K562 (cell line): ENCODE measurements at regions of chr12 and their contacts with region 1.

Region 1: GRCh38 chr12:123232807-123233543 is at the starts of genes MPHOSPH9 and MTRFR:
- DNase-seq: peak; percentile 98 to 99 (median 99)
- ATAC-seq: peak; percentile 95
- H3K4me3 ChIP-seq: peak within 1 kb of the TSS; percentile 72
- H3K27ac ChIP-seq: peak within 1 kb of the TSS; percentile 94
- H3K4me1 ChIP-seq: peaks cover 19 to 21% of the 10 kb centered on the region in 2 experiments; a peak in 4 of 5 replicates
- H3K27me3 ChIP-seq: no peaks in the 10 kb centered on the region
- CTCF ChIP-seq: no peak
- EP300 ChIP-seq: no peak
- POLR2A ChIP-seq: peak; percentile 100
- RAD21 ChIP-seq: 0 out of 4 replicates have a peak, but pooled peaks of 1 of the 2 experiments have one; percentile 3
- polyA plus RNA-seq, gene MPHOSPH9: 14.2 to 22.5 TPM
- polyA plus RNA-seq, gene MTRFR: 52.6 to 55.6 TPM

Region 2: GRCh38 chr12:122356192-122356635 is 876.8 kb before region 1 on chr12:
- CTCF ChIA-PET with region 1: no interaction called
- POLR2A ChIA-PET with region 1: no interaction called
- in situ Hi-C with region 1: no loop called
- intact Hi-C with region 1: loop called (anchors 5 kb)
- DNase-seq: peak; percentile 33 to 69 (median 56)
- ATAC-seq: peak; percentile 98
- H3K4me3 ChIP-seq: no peak overlapping the region
- H3K27ac ChIP-seq: no peak overlapping the region
- H3K4me1 ChIP-seq: no peaks in the 10 kb centered on the region
- H3K27me3 ChIP-seq: no peaks in the 10 kb centered on the region
- CTCF ChIP-seq: peak; percentile 60 to 82 (median 82)
- EP300 ChIP-seq: no peak
- POLR2A ChIP-seq: no peak
- RAD21 ChIP-seq: peak; percentile 72 to 74

Region 3: DNA sequence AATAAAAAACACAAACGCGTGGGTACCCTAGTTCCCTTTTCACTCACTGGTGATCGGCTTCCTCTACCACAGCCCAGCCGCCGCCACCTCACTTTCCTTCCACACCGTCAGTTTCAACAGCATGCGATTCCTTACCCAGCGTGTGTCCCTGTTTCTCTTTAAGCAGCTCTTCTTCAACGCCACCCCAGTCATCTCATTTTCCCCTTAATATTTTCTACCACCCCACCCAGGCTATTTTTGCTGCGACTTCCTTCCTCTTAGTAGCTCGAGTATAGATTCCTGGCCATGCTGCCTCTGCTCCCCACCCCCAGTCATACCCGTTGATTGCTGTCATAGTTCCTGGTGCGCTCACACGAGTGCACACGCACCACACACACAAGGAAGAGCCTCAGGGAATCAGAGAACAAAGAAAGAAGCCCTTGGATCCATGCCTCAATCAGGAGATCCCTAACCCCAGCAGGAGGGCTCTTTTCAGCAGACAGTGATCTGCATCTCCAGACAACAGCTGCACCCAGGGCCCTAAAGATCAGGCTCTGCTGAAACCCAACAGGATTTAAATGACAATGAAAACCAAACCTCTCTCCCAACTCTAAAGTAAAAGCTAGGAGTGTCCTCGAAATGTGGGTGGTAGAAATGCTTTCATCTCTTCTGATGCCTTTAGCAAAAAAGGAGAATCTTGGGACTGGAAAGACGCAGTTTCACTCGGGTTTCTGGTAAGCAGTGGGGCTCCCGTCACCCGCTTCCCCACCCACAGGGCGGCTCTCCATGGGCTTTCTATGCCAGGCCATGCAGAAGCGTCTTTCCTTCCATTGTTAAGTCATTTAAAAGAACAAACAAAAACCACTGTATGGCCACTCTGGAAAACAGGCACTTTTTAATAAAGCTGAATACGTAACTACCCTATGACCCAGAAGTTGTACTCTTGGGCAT is 360.9 kb before region 1 on chr12:
- CTCF ChIA-PET with region 1: no interaction called
- POLR2A ChIA-PET with region 1: no interaction called
- in situ Hi-C with region 1: loop called (anchors 10 kb)
- intact Hi-C with region 1: no loop called
- DNase-seq: no peak
- ATAC-seq: no peak
- H3K4me3 ChIP-seq: no peak overlapping the region
- H3K27ac ChIP-seq: no peak overlapping the region
- H3K4me1 ChIP-seq: peaks cover 5 to 26% of the 10 kb centered on the region in 2 experiments; a peak in 3 of 5 replicates
- H3K27me3 ChIP-seq: no peaks in the 10 kb centered on the region
- CTCF ChIP-seq: no peak
- EP300 ChIP-seq: no peak
- POLR2A ChIP-seq: no peak
- RAD21 ChIP-seq: no peak

Region 4: GRCh38 chr12:122963953-122964301 is 269.0 kb before region 1 on chr12:
- CTCF ChIA-PET with region 1: no interaction called
- POLR2A ChIA-PET with region 1: interaction called, 4 read pairs
- in situ Hi-C with region 1: no loop called
- intact Hi-C with region 1: loop called (anchors 5 kb)
- DNase-seq: no peak
- ATAC-seq: no peak
- H3K4me3 ChIP-seq: no peak overlapping the region
- H3K27ac ChIP-seq: peak overlapping the region; percentile 58; the same call in 2 of the 3 replicates
- H3K4me1 ChIP-seq: peaks cover 33 to 56% of the 10 kb centered on the region in 2 experiments
- H3K27me3 ChIP-seq: no peaks in the 10 kb centered on the region
- CTCF ChIP-seq: no peak
- EP300 ChIP-seq: no peak
- POLR2A ChIP-seq: no peak
- RAD21 ChIP-seq: no peak

Region 5: GRCh38 chr12:123043536-123044001 is 189.4 kb before region 1 on chr12:
- CTCF ChIA-PET with region 1: no interaction called
- POLR2A ChIA-PET with region 1: interaction called, 7 read pairs
- in situ Hi-C with region 1: no loop called
- intact Hi-C with region 1: loop called (anchors 5 kb)
- DNase-seq: peak in 2 of 4 experiments; percentile 38 to 57
- ATAC-seq: peak; percentile 85
- H3K4me3 ChIP-seq: no peak overlapping the region
- H3K27ac ChIP-seq: no peak overlapping the region
- H3K4me1 ChIP-seq: no peaks in the 10 kb centered on the region
- H3K27me3 ChIP-seq: no peaks in the 10 kb centered on the region
- CTCF ChIP-seq: peak; percentile 64 to 73 (median 67)
- EP300 ChIP-seq: no peak
- POLR2A ChIP-seq: no peak
- RAD21 ChIP-seq: peak; percentile 72 to 81

Region 6: DNA sequence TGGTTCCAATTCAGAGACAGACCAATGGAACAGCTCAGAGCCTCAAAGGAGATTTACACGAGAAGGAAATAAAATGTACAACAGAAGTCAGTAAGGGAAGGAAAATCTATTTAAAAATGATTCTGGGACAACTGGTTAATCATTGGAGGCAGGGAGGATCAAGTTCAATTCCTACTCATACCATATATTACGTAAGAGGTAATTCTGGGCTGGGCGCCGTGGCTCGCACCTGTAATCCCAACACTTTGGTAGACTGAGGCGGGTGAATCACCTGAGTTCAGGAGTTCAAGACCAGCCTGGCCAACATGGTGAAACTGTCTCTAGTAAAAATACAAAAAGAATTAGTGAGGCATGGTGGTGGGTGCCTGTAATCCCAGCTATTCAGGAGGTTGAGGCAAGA is 45.3 kb before region 1 on chr12:
- CTCF ChIA-PET with region 1: no interaction called
- POLR2A ChIA-PET with region 1: interaction called, 11 read pairs
- in situ Hi-C with region 1: no loop called
- intact Hi-C with region 1: no loop called
- DNase-seq: no peak
- ATAC-seq: no peak
- H3K4me3 ChIP-seq: no peak overlapping the region
- H3K27ac ChIP-seq: no peak overlapping the region
- H3K4me1 ChIP-seq: no peaks in the 10 kb centered on the region
- H3K27me3 ChIP-seq: no peaks in the 10 kb centered on the region
- CTCF ChIP-seq: no peak
- EP300 ChIP-seq: no peak
- POLR2A ChIP-seq: no peak
- RAD21 ChIP-seq: no peak

Region 7: DNA sequence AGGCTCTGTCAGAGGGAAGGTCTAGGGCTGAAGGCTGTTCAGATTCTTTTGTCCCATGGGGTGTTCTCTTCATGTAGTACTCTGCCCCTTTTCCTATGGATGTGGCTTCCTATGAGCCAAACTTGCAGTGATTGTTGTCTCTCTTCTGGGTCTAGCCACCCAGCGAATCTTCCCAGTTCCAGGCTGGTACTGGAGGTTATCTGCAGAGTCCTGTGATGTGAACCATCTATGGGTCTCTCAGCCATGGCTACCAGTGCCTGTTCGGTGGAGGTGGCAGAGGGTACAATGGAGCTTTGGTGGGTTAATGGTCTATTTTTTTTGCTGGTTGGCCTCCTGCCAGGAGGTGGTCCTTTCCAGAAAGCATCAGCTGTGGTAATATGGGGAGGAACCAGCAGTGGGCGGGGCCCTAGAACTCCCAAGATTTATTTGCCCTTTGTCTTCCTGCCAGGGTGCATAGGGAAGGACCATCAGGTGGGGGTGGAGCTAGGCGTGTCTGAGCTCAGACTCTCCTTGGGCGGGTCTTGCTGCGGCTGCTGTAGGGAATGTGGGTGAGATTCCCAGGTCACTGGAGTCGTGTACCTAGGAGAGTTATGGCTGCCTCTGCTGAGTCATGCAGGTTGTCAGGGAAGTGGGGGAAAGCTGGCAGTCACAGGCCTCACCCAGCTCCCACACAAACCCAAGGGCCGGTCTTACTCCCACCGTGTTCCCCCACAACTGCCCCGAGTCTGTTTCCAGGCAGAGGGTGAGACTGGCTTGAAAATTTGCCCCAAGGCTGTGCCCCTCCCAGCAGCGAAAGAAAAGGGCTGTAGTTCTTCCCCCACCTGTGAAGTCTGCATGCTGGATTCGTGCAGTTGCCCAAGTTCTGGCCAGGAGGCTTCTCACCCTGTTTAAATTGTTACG is 17.8 kb after region 1 on chr12:
- CTCF ChIA-PET with region 1: no interaction called
- POLR2A ChIA-PET with region 1: interaction called, 43 read pairs
- in situ Hi-C with region 1: no loop called
- intact Hi-C with region 1: no loop called
- DNase-seq: peak in 3 of 4 experiments; percentile 55 to 74 (median 55)
- ATAC-seq: peak; percentile 79
- H3K4me3 ChIP-seq: no peak overlapping the region
- H3K27ac ChIP-seq: peak overlapping the region; percentile 62
- H3K4me1 ChIP-seq: peaks cover 21 to 22% of the 10 kb centered on the region in 2 experiments
- H3K27me3 ChIP-seq: no peaks in the 10 kb centered on the region
- CTCF ChIP-seq: no peak
- EP300 ChIP-seq: no peak
- POLR2A ChIP-seq: no peak
- RAD21 ChIP-seq: no peak

Region 8: GRCh38 chr12:123829561-123829960 is 596.6 kb after region 1 on chr12:
- CTCF ChIA-PET with region 1: no interaction called
- POLR2A ChIA-PET with region 1: no interaction called
- in situ Hi-C with region 1: no loop called
- intact Hi-C with region 1: no loop called
- DNase-seq: no peak
- ATAC-seq: no peak
- H3K4me3 ChIP-seq: no peak overlapping the region
- H3K27ac ChIP-seq: no peak overlapping the region
- H3K4me1 ChIP-seq: no peaks in the 10 kb centered on the region
- H3K27me3 ChIP-seq: peaks cover 5 to 12% of the 10 kb centered on the region in 2 experiments; a peak in 4 of 5 replicates
- CTCF ChIP-seq: no peak
- EP300 ChIP-seq: no peak
- POLR2A ChIP-seq: no peak
- RAD21 ChIP-seq: no peak

Region 9: DNA sequence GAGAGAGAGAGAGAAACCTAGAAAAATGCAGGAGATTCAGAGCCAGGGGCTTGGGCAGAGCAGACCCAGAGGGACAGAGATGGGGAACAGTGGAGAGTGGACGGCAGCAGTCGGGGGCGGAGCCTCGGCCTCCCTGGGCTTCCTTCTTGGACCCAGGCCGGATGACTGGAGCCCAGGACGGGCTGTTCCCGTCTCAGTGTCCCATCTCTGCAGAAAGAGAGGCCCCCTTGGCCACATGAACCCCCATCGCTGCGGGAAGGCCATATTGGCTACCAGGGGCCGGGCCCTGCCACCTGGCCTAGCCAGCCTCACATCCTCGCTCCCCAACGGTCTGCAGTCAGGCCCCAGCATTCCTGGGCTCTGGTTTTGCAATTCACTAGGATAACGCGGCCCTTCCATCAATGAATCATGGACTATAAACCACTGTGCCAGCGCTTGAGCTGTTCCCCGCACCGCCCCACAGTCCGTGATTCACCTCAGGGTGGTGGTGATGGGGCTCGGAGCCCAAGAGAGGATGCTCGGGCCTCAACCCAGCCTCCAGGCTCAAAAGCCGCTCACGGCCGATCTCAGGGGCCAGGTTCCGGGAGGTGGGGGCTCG is 1178.4 kb after region 1 on chr12:
- CTCF ChIA-PET with region 1: no interaction called
- POLR2A ChIA-PET with region 1: no interaction called
- in situ Hi-C with region 1: no loop called
- intact Hi-C with region 1: no loop called
- DNase-seq: no peak
- ATAC-seq: no peak; the same call in 2 of the 3 replicates
- H3K4me3 ChIP-seq: no peak overlapping the region
- H3K27ac ChIP-seq: no peak overlapping the region
- H3K4me1 ChIP-seq: peaks cover 0 to 31% of the 10 kb centered on the region in 2 experiments; a peak in 2 of 5 replicates
- H3K27me3 ChIP-seq: no peaks in the 10 kb centered on the region
- CTCF ChIP-seq: no peak
- EP300 ChIP-seq: no peak
- POLR2A ChIP-seq: no peak
- RAD21 ChIP-seq: no peak